ENCODE measurements at regions of chr12 and their contacts with region 1.

Region 1: GRCh38 chr12:55862286-55862685 is 19.6 kb upstream of the MMP19 start:
- DNase-seq: no peak
- H3K4me3 ChIP-seq: no peak overlapping the region
- H3K27ac ChIP-seq: no peak overlapping the region
- H3K4me1 ChIP-seq: no peaks in the 10 kb centered on the region
- H3K27me3 ChIP-seq: no peaks in the 10 kb centered on the region
- CTCF ChIP-seq: no peak
- EP300 ChIP-seq: no peak
- POLR2A ChIP-seq: no peak

Region 2: DNA sequence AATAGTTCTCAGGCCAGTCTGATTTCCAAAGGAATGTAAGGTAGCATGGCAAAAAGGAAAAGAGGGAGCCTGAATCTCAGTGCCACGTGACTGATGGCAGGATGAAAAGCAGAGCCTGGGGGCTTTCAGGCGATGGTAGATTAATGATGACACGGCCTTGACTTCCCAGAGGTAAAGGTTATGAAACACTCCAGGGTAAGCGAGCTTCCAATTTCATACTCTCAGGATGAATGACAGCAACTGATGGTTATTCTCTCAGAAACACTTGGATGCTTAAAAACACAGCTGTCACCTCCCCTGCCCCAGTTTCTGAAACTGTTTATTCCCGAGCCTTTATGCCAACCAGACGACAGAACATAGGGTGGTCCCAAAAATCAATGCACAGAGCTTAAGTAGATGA is 90.5 kb before region 1 on chr12:
- intact Hi-C with region 1: loop called (anchors 10 kb)
- DNase-seq: no peak
- H3K4me3 ChIP-seq: no peak overlapping the region
- H3K27ac ChIP-seq: no peak overlapping the region
- H3K4me1 ChIP-seq: no peaks in the 10 kb centered on the region
- H3K27me3 ChIP-seq: no peaks in the 10 kb centered on the region
- CTCF ChIP-seq: no peak
- EP300 ChIP-seq: no peak
- POLR2A ChIP-seq: no peak

Region 3: GRCh38 chr12:55996715-55997534 is 134.6 kb after region 1 on chr12 and contains the start of gene SUOX:
- intact Hi-C with region 1: no loop called
- DNase-seq: peak; percentile 97 to 99
- H3K4me3 ChIP-seq: peak within 1 kb of the TSS; percentile 59 to 68 (median 63)
- H3K27ac ChIP-seq: peak within 1 kb of the TSS; percentile 82 to 88 (median 86)
- H3K4me1 ChIP-seq: peaks cover 7 to 46% (median 38%) of the 10 kb centered on the region in 4 donors
- H3K27me3 ChIP-seq: no peaks in the 10 kb centered on the region
- CTCF ChIP-seq: no peak
- EP300 ChIP-seq: no peak
- POLR2A ChIP-seq: no peak
- total RNA-seq, gene SUOX: 9.0 to 67.7 (median 10.0) TPM

Region 4: GRCh38 chr12:56078990-56079664 is 216.8 kb after region 1 on chr12:
- intact Hi-C with region 1: no loop called
- DNase-seq: peak; percentile 95
- H3K4me3 ChIP-seq: peak overlapping the region; percentile 55 to 73 (median 66)
- H3K27ac ChIP-seq: peak overlapping the region; percentile 92 to 98 (median 93)
- H3K4me1 ChIP-seq: peaks cover 18 to 42% (median 34%) of the 10 kb centered on the region in 4 donors
- H3K27me3 ChIP-seq: peaks cover 0 to 15% (median 6%) of the 10 kb centered on the region in 3 donors
- CTCF ChIP-seq: peak in 5 of 7 experiments; percentile 68 to 86 (median 83)
- EP300 ChIP-seq: no peak
- POLR2A ChIP-seq: peak in 1 of 4 donors; percentile 58